Sigmoid colon (tissue), 7 donors: ENCODE measurements at regions of chr7 and their contacts with region 1.

Region 1: DNA sequence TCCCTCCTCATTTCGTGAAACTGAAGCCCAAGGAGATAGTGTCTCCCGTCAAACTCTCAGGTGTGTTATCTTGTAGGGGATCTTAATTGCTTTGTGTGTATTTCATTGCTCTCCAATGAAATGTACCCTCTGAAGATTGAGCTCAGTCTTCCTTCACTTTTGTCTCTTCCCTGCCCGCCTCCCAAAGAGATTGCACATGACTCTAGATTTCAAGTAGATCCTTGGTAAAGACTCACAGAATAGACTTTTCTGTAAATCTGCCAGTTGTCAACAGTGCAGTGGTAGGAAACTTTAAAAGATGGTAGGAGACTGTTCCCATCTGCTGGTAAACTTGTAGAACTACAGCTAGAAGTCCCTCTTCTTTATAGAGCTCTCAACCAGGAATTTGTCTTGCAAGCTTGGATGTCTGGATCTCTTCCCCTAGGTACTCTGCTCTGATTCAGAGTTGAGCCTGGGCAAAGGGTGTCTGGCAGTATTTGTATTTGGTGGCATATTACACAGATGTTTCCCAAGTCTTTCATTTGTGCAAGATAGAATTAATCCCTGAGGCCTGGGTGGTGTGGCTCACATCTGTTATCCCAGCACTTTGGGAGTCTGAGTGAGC is 9.6 kb downstream of the CCL26 start:
- DNase-seq: no peak
- H3K4me3 ChIP-seq: no peak overlapping the region
- H3K27ac ChIP-seq: no peak overlapping the region
- H3K4me1 ChIP-seq: no peaks in the 10 kb centered on the region
- H3K27me3 ChIP-seq: no peaks in the 10 kb centered on the region
- CTCF ChIP-seq: peak; percentile 58 to 78 (median 67)
- EP300 ChIP-seq: no peak
- POLR2A ChIP-seq: no peak

Region 2: DNA sequence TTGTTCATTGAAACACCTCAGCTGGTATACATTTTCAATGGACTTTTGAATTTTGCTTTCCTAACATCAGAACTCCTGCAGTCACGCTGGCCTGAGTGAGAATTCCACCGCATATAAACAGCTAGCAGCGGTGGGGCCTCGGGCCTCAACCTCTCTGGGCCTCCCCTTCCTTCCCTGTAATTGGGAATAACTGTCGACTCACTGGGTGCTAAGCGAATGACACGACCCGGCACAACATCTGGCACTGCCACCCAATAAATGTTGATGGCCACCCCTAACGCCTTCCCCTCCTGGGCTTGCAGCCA is 689.5 kb before region 1 on chr7:
- intact Hi-C with region 1: loop called (anchors 10 kb)
- DNase-seq: no peak
- H3K4me3 ChIP-seq: peak overlapping the region; percentile 83 to 100 (median 88)
- H3K27ac ChIP-seq: peak overlapping the region; percentile 88 to 99 (median 93)
- H3K4me1 ChIP-seq: peaks cover 0 to 15% (median 10%) of the 10 kb centered on the region in 4 donors
- H3K27me3 ChIP-seq: no peaks in the 10 kb centered on the region
- CTCF ChIP-seq: no peak
- EP300 ChIP-seq: no peak
- POLR2A ChIP-seq: no peak

Region 3: GRCh38 chr7:75599244-75599781 is 163.1 kb before region 1 on chr7:
- intact Hi-C with region 1: no loop called
- DNase-seq: peak; percentile 71
- H3K4me3 ChIP-seq: no peak overlapping the region
- H3K27ac ChIP-seq: peak overlapping the region; percentile 30 to 59 (median 50)
- H3K4me1 ChIP-seq: no peaks in the 10 kb centered on the region
- H3K27me3 ChIP-seq: no peaks in the 10 kb centered on the region
- CTCF ChIP-seq: no peak
- EP300 ChIP-seq: no peak
- POLR2A ChIP-seq: no peak

Region 4: DNA sequence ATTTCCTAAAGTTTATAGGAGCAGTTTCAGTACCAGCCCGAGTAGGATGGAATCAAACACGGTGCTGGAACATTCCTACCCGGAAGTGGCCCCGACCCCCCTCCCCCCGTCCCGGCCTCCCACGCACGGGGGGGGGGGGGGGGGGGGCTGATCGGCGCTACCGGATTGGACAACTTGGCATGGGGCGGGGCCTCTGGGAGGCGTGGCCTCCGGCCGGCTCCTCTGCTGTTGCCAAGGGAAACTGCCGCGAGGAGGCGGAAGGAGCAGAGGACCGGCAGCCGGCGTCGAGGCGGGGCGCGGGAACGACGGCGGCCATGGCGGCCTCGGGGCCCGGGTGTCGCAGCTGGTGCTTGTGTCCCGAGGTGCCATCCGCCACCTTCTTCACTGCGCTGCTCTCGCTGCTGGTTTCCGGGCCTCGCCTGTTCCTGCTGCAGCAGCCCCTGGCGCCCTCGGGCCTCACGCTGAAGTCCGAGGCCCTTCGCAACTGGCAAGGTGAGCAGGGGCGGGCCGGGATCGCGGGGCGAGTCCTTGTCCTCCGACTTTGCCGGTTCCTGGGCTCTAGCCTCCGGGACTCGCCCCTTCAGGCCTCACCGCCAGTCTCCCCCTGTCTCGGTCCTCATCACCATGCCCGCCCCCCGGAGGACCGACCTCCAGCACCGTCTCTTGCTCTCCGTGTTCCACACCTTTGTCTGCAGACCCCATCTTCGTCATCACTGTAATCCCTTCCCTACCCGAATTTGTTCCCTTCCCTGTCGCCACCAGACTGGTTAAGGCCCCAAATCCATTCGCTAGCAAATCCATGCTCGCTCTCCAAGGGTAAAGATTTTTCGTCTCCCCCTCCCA is 116.6 kb after region 1 on chr7 and contains the start of gene RHBDD2:
- intact Hi-C with region 1: no loop called
- DNase-seq: peak; percentile 98
- H3K4me3 ChIP-seq: peak within 1 kb of the TSS; percentile 66 to 85 (median 76)
- H3K27ac ChIP-seq: peak within 1 kb of the TSS; percentile 70 to 85 (median 83)
- H3K4me1 ChIP-seq: peaks cover 0 to 23% (median 16%) of the 10 kb centered on the region in 4 donors
- H3K27me3 ChIP-seq: no peaks in the 10 kb centered on the region
- CTCF ChIP-seq: peak in 1 of 4 experiments; percentile 25
- EP300 ChIP-seq: no peak
- POLR2A ChIP-seq: peak; percentile 92 to 94
- total RNA-seq, gene RHBDD2: 14.3 to 31.9 (median 27.0) TPM